Left cardiac atrium (tissue), 4 donors: ENCODE measurements at regions of chr2 and their contacts with region 1.

Region 1: DNA sequence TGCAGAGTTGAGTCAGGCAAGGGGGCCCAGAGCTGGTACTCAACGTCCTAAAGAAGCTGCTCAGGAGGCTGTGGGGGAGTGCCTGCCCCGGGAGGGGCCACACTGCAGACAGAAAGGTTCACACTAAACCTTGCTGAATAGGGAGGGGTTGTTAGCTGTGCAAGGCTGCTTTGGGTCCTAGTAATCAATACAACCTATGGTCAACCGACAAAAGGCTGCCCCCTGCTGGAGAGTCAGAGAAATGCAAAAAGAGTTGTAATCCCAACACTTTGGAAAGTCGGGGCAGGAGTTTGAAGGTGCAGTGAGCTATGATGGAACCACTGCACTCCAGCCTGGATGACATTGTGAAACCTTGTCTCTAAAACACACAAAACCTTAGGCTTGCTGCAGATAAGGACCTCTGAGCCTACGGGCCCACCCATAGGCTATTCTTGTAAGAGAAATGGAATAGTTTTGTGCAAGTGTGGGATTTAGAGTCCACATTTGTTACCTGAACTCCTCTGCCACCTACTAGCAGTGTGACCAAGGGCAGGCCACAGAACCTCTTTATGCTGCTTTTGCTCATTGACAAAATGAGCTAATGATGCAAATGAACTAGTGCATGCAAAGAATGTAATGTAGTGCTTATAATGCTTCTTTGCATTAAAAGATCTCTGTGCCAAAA is 81.5 kb downstream of the PRPF40A start:
- DNase-seq: peak; percentile 48
- ATAC-seq: peak; percentile 68 to 69

Region 2: GRCh38 chr2:151967829-151968722 is 667.7 kb before region 1 on chr2:
- intact Hi-C with region 1: no loop called
- DNase-seq: no peak
- ATAC-seq: no peak

Region 3: GRCh38 chr2:152189622-152190495 is 445.9 kb before region 1 on chr2:
- intact Hi-C with region 1: loop called (anchors 2 to 5 kb)
- DNase-seq: peak; percentile 39
- ATAC-seq: peak; percentile 90 to 93